ENCODE measurements at regions of chr4 and their contacts with region 1.

Region 1: DNA sequence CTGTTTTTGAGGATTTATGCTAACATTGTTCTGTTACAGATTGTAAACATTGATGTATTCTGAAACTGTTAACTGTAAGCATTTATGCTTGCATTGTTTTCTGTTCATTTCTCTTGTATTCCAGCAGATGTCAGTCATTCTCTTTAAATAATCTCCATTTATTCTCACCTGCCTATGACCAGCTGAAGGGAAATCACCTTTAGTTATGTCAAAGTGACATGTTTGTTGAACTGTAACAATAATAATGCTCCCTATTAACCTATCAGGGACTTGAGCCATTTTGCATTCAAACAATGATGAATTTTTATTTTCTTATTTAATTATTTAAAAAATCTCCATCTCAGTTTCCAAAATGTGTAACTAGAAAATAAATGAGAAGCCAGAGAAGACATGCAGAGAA is 58.0 kb downstream of the SPCS3 start:
- DNase-seq: no peak
- H3K4me3 ChIP-seq: no peak overlapping the region
- H3K27ac ChIP-seq: no peak overlapping the region
- H3K27me3 ChIP-seq: no peaks in the 10 kb centered on the region
- CTCF ChIP-seq: peak; percentile 56

Region 2: DNA sequence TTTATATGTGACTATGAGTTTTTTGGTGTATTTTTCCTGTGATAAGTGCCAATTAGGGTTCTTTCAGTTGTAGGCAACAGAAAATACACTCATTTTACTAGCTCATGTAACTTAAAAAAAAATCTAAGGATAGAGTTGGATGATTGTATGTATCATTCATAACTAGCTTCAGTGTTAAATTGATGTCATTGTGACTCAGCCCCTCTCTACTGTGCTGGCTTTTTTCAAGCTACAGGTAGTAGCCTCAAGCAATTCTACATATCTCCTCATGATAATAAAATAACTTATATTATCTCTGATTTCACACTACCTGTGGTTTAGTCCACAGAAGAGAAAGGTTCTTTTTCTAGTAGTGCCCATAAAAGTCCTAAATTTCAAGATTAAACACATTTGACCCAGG is 300.2 kb before region 1 on chr4:
- CTCF ChIA-PET with region 1: no interaction called
- POLR2A ChIA-PET with region 1: no interaction called
- DNase-seq: no peak
- H3K4me3 ChIP-seq: no peak overlapping the region
- H3K27ac ChIP-seq: no peak overlapping the region
- H3K27me3 ChIP-seq: no peaks in the 10 kb centered on the region
- CTCF ChIP-seq: no peak

Region 3: DNA sequence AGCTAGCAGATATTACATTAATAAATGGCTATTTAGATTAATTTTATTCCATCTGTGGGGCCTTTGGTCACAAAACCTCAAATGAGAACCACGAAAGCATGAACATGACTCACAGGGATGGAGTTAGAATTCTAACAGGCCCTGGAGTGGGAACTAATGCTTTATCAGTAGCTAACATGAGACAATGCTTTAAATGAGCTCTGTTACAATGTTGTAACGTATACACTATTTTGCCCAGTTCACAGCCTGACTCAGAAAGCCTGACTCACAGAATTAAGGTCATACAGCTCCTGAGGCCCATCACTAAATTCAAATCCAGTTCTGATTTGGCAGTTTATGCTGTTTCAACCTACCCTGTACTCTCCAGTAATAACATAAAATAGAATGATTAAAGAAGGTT is 391.7 kb after region 1 on chr4:
- CTCF ChIA-PET with region 1: interaction called, 10 read pairs
- POLR2A ChIA-PET with region 1: no interaction called
- DNase-seq: peak; percentile 80
- H3K4me3 ChIP-seq: no peak overlapping the region
- H3K27ac ChIP-seq: peak overlapping the region; percentile 89
- H3K27me3 ChIP-seq: no peaks in the 10 kb centered on the region
- CTCF ChIP-seq: no peak

Region 4: GRCh38 chr4:176789955-176790354 is 412.2 kb after region 1 on chr4:
- CTCF ChIA-PET with region 1: interaction called, 18 read pairs
- POLR2A ChIA-PET with region 1: no interaction called
- DNase-seq: no peak
- H3K4me3 ChIP-seq: peak overlapping the region; percentile 85
- H3K27ac ChIP-seq: no peak overlapping the region
- H3K27me3 ChIP-seq: no peaks in the 10 kb centered on the region
- CTCF ChIP-seq: peak; percentile 79

Region 5: GRCh38 chr4:176817204-176817603 is 439.4 kb after region 1 on chr4:
- CTCF ChIA-PET with region 1: interaction called, 11 read pairs
- POLR2A ChIA-PET with region 1: no interaction called
- DNase-seq: no peak
- H3K4me3 ChIP-seq: no peak overlapping the region
- H3K27ac ChIP-seq: no peak overlapping the region
- H3K27me3 ChIP-seq: no peaks in the 10 kb centered on the region
- CTCF ChIP-seq: no peak

Measured in AG04450 (cell line).